Brain microvascular endothelial cell (primary cell): ENCODE measurements at regions of chr6 and their contacts with region 1.

Region 1: GRCh38 chr6:132483779-132484679 is 28.9 kb downstream of the STX7 start:
- DNase-seq: peak; percentile 48
- H3K4me3 ChIP-seq: no peak overlapping the region
- H3K27ac ChIP-seq: no peak overlapping the region
- H3K27me3 ChIP-seq: no peaks in the 10 kb centered on the region
- CTCF ChIP-seq: peak; percentile 62

Region 2: GRCh38 chr6:132279592-132280139 is 204.4 kb before region 1 on chr6:
- in situ Hi-C with region 1: loop called (anchors 25 kb)
- DNase-seq: peak; percentile 59
- H3K4me3 ChIP-seq: peak overlapping the region; percentile 58
- H3K27ac ChIP-seq: no peak overlapping the region
- H3K27me3 ChIP-seq: no peaks in the 10 kb centered on the region
- CTCF ChIP-seq: peak; percentile 72